ENCODE measurements at regions of chr14 and their contacts with region 1.

Region 1: GRCh38 chr14:71206766-71207371 is 299.6 kb downstream of the PCNX1 start:
- DNase-seq: peak; percentile 66
- H3K4me3 ChIP-seq: no peak overlapping the region
- H3K27me3 ChIP-seq: no peaks in the 10 kb centered on the region
- CTCF ChIP-seq: no peak

Region 2: GRCh38 chr14:71536927-71537772 is 330.3 kb after region 1 on chr14:
- CTCF ChIA-PET with region 1: no interaction called
- POLR2A ChIA-PET with region 1: interaction called, 10 read pairs
- DNase-seq: no peak
- H3K4me3 ChIP-seq: no peak overlapping the region
- H3K27me3 ChIP-seq: no peaks in the 10 kb centered on the region
- CTCF ChIP-seq: no peak